Activated CD4-positive, alpha-beta T cell treated with anti-CD3 and anti-CD28 coated beads, Interleukin-2, amount 10 ng/mL, durations not matched to agents 7 days and 5 days (primary cell): ENCODE measurements at regions of chr11 and their contacts with region 1.

Region 1: GRCh38 chr11:112588252-112588694 is 327.6 kb upstream of the PLET1 start:
- DNase-seq: peak; percentile 62
- H3K4me3 Mint-ChIP-seq: no peak overlapping the region
- H3K27ac Mint-ChIP-seq: no peak overlapping the region
- H3K4me1 Mint-ChIP-seq: no peaks in the 10 kb centered on the region
- H3K27me3 Mint-ChIP-seq: no peaks in the 10 kb centered on the region

Region 2: GRCh38 chr11:112599856-112600533 is 11.7 kb after region 1 on chr11:
- CTCF ChIA-PET with region 1: no interaction called
- POLR2A ChIA-PET with region 1: no interaction called
- DNase-seq: no peak
- H3K4me3 Mint-ChIP-seq: no peak overlapping the region
- H3K27ac Mint-ChIP-seq: no peak overlapping the region
- H3K4me1 Mint-ChIP-seq: peaks cover 10% of the 10 kb centered on the region
- H3K27me3 Mint-ChIP-seq: peaks cover 6% of the 10 kb centered on the region

Region 3: GRCh38 chr11:113289431-113290187 is 701.3 kb after region 1 on chr11:
- CTCF ChIA-PET with region 1: interaction called, 17 read pairs
- POLR2A ChIA-PET with region 1: interaction called, 3 read pairs
- DNase-seq: peak; percentile 63
- H3K4me3 Mint-ChIP-seq: no peak overlapping the region
- H3K27ac Mint-ChIP-seq: no peak overlapping the region
- H3K4me1 Mint-ChIP-seq: no peaks in the 10 kb centered on the region
- H3K27me3 Mint-ChIP-seq: peaks cover 2% of the 10 kb centered on the region